GM10248 (cell line): ENCODE measurements at regions of chr17 and their contacts with region 1.

Region 1: DNA sequence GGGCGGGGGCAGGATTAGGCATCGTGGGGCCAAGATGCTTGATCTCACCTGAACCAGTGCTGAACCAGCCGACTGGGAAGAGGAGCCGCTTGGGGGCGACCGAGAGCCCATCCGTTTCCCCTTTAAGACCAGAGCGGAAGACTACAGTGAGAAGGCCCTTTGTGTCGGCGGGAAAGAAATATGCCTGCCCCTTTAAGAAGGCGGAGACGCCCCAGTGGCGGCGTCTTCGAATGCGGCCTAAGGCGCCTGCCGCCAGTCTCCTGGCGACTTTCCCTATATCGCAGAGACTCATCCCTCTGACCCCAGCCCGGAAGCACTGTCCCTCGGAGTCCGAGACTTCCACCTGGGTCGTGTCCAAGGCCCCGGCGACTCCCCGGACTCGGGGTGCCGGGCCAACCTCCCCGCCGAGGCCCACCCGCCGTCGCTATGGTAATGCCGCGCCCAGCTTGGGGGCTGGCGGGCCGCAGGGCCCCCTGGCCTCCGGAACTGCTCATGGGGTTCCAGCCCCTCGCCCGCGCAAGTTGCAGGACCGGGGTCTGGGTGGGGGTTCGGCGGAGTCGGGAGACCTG is at the start of gene HROB:
- DNase-seq: peak; percentile 95
- CTCF ChIP-seq: peak; percentile 91

Region 2: GRCh38 chr17:44095642-44096496 is 45.9 kb before region 1 on chr17:
- CTCF ChIA-PET with region 1: no interaction called
- POLR2A ChIA-PET with region 1: interaction called, 17 read pairs
- DNase-seq: peak; percentile 62
- CTCF ChIP-seq: no peak

Region 3: GRCh38 chr17:44123356-44124117 is 18.3 kb before region 1 on chr17 and contains the start of gene HDAC5:
- CTCF ChIA-PET with region 1: interaction called, 17 read pairs
- POLR2A ChIA-PET with region 1: interaction called, 7 read pairs
- DNase-seq: peak; percentile 97
- CTCF ChIP-seq: peak; percentile 72

Region 4: GRCh38 chr17:44218344-44219107 is 76.7 kb after region 1 on chr17:
- CTCF ChIA-PET with region 1: no interaction called
- POLR2A ChIA-PET with region 1: interaction called, 10 read pairs
- DNase-seq: peak; percentile 92
- CTCF ChIP-seq: peak; percentile 70